Activated T-helper 2 cell treated with anti-CD3 and anti-CD28 coated beads, Interferon-gamma antibody, Interleukin-2, Interleukin-4, amounts not matched to agents 10 μg/mL and 5 μg/mL and 100 μg/mL, durations not matched to agents 14 hours and 24 hours and 36 hours (primary cell): ENCODE measurements at regions of chr3 and their contacts with region 1.

Region 1: DNA sequence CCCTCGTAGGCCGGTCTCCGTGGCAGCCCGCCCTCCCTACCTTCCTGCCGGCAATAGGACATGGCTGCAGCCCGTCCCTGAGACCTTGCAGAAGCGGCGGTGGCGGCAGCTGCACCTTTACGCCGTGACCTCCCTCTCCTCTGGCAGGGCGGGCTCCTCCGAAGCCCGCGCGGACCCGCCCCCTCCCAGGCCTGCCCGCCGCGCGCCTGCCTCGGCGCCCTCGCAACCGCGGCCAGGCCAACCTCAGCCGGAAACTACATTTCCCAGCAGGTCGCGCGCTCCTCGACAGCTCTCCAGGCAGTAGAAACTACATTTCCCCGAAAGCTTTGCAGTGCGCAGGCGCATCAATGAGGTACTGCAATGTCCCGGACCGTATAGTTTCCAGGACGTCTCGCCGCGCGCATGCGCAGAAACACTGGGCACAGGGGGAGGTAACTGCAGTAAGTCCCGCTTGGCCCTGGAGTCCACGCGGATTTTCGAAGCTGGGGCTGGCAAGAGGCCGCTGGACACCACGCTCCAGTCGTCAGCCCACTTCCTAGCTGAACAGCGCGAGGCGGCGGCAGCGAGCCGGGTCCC is at the starts of genes CHCHD4 and TMEM43:
- DNase-seq: peak; percentile 98
- H3K4me3 Mint-ChIP-seq: peak within 1 kb of the TSS; percentile 97
- H3K27ac Mint-ChIP-seq: peak within 1 kb of the TSS; percentile 93
- H3K4me1 Mint-ChIP-seq: peaks cover 40% of the 10 kb centered on the region
- H3K27me3 Mint-ChIP-seq: no peaks in the 10 kb centered on the region
- total RNA-seq, gene CHCHD4: 24.8 and 25.0 TPM in 2 replicates
- total RNA-seq, gene TMEM43: 36.7 and 39.2 TPM in 2 replicates

Region 2: DNA sequence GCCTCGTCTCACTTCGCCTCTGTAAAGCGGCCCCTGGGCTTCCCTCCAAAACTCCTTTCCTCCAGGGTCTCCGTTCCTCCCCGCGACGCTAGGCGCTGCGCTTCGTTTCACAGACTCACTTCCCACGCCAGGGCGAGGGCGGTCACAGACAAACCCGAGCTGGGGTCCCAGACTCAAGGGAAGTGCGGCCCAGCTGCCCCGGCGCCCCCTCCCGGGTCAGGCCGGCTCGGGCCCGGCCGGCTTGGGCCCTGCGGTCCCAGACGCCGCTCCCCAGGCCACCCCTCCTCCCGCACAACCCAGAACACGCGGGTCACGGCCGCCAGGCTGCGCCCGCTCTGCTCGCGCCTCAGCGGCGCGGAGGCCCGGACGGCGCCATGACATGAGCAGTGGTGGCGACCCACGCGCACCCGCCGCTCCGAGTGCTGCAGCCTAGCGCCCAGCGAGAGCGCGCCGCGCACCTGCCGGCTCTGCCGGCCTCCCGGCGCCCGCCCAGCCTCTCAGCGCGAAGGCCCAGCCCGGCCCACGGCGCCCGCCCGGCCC is 705.1 kb before region 1 on chr3:
- intact Hi-C with region 1: loop called (anchors 10 kb)
- DNase-seq: peak; percentile 54
- H3K4me3 Mint-ChIP-seq: peak overlapping the region; percentile 86
- H3K27ac Mint-ChIP-seq: peak overlapping the region; percentile 89
- H3K4me1 Mint-ChIP-seq: peaks cover 64% of the 10 kb centered on the region
- H3K27me3 Mint-ChIP-seq: no peaks in the 10 kb centered on the region

Region 3: GRCh38 chr3:13559764-13560525 is 564.8 kb before region 1 on chr3:
- intact Hi-C with region 1: no loop called
- DNase-seq: no peak
- H3K4me3 Mint-ChIP-seq: no peak overlapping the region
- H3K27ac Mint-ChIP-seq: no peak overlapping the region
- H3K4me1 Mint-ChIP-seq: no peaks in the 10 kb centered on the region
- H3K27me3 Mint-ChIP-seq: peaks cover 17% of the 10 kb centered on the region

Region 4: DNA sequence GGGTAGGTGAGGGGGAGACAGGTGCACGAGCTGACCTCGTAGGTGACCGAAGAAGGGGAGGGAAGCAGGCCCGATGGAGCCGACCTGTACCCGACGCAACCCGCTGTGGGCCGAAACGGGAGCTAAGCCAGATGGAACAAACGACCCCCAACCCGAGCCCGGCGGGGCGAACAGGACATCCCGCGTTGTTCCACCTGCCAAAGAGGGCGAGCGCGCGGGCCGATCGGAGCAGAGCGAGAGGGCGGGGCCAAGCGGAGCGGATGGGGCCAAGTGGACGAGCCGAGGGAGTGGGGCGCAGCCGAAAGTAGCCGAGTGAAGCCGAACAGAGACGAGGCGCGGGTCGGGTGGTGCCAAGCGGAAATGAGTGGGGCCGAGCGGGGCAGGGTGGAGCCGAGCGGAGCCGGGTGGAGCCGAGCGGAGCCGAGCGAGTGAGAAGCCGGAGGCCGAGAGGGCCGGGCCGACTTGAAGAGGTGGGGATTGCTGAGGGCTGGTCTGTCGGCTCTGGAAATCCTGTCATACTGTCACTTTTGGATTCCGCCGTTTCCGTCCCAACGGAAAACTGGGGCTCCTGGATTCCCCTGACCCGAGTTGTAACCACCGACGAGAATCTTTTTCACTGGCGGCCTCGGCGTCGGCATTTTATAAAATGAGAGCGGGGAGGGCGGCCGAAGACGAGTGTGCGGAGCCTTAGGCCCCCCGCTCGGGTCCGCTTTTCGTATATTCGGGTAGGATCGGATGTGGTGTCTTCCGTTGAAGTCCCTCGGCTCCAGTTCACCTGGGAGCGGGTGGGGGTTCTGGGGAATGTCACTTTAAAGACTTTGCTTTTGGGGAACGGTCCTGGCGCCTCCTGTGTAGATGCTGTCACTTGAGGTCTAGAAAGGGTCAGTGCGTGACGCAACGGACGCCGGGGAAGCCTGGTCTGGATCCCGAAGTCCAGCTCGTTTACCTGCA is 229.3 kb before region 1 on chr3:
- intact Hi-C with region 1: loop called (anchors 1 kb)
- DNase-seq: peak; percentile 95
- H3K4me3 Mint-ChIP-seq: peak overlapping the region; percentile 87
- H3K27ac Mint-ChIP-seq: peak overlapping the region; percentile 71
- H3K4me1 Mint-ChIP-seq: peaks cover 21% of the 10 kb centered on the region
- H3K27me3 Mint-ChIP-seq: peaks cover 3% of the 10 kb centered on the region

Region 5: GRCh38 chr3:14113965-14114635 is 10.6 kb before region 1 on chr3:
- intact Hi-C with region 1: no loop called
- DNase-seq: no peak
- H3K4me3 Mint-ChIP-seq: no peak overlapping the region
- H3K27ac Mint-ChIP-seq: no peak overlapping the region
- H3K4me1 Mint-ChIP-seq: peaks cover 1% of the 10 kb centered on the region
- H3K27me3 Mint-ChIP-seq: no peaks in the 10 kb centered on the region

Region 6: DNA sequence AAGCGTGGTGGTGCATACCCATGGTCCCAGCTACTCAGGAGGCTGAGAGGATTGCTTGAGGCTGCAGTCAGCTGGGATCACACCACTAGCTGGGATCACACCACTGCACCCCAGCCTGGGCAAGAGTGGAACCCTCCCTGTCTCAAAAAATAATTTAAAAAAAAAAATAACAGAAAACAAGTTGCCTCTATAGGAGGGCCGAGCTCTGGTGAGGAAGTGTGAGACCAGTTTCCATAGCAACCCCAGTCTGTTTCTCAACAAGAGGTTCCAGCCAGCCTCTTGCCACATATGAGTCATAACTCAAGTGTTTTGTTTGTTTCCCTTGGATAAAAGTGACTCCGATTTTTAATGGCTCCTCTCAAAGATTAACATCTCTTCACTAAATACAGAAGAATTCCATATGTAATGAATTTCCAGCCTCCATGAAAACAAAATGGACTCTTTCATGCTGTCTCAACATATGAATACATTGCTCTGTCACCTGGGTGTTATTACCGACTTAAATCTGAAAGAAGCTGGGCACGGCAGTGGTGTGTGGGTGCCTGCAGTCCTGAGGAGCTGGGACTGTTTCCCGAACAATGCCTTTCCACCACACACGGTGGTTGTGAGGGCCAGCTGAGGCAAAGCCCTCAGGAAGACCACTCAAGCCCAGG is 19.8 kb after region 1 on chr3:
- intact Hi-C with region 1: loop called (anchors 1 kb)
- DNase-seq: peak; percentile 73
- H3K4me3 Mint-ChIP-seq: peak overlapping the region; percentile 15
- H3K27ac Mint-ChIP-seq: peak overlapping the region; percentile 85
- H3K4me1 Mint-ChIP-seq: peaks cover 29% of the 10 kb centered on the region
- H3K27me3 Mint-ChIP-seq: no peaks in the 10 kb centered on the region

Region 7: GRCh38 chr3:14426063-14426620 is 301.4 kb after region 1 on chr3:
- intact Hi-C with region 1: loop called (anchors 10 kb)
- DNase-seq: peak; percentile 42
- H3K4me3 Mint-ChIP-seq: peak overlapping the region; percentile 66
- H3K27ac Mint-ChIP-seq: peak overlapping the region; percentile 87
- H3K4me1 Mint-ChIP-seq: peaks cover 80% of the 10 kb centered on the region
- H3K27me3 Mint-ChIP-seq: no peaks in the 10 kb centered on the region

Region 8: DNA sequence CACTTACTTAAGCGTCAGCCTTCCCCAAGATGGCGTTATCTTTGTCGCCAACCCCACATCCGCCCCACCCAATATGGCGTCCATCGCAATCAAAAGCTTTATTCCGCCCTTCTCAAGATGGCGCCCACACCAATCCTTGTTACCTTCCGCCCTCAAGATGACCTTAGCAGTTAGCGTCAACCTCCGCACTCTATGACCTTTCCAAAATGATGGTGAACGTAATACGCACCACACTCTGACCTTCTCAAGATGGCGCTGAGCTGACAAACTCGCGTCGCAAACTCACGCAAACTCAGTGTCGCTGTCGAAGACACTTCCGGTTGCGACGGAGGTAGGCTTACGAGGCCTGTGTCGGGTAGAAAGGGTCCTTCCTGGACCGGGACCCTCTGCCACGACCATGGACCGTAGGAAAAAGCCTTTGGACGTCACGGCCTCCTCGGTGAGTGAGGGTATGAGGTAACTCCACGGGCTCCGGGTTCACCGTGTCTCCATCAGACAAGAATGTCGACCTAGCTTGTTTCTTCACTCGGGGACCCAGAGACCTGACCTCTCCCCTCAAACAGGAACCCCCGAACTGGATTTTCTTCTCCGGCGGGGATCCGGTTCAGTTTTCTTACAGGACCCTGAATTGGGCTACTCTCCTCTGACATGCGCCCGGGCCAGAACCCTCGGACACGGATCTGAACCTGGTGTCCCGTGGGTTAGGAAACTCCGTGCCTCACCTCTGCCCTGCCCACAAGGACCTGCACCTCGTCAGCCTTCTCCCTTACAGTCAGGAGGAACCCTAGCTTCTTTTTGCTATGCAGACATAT is 526.9 kb after region 1 on chr3 and contains the start of gene CCDC174:
- intact Hi-C with region 1: loop called (anchors 1 kb)
- DNase-seq: peak; percentile 94
- H3K4me3 Mint-ChIP-seq: peak within 1 kb of the TSS; percentile 92
- H3K27ac Mint-ChIP-seq: peak within 1 kb of the TSS; percentile 95
- H3K4me1 Mint-ChIP-seq: peaks cover 30% of the 10 kb centered on the region
- H3K27me3 Mint-ChIP-seq: no peaks in the 10 kb centered on the region
- total RNA-seq, gene CCDC174: 15.0 and 18.8 TPM in 2 replicates